Activated CD4-positive, alpha-beta memory T cell treated with anti-CD3 and anti-CD28 coated beads for 36 hours (primary cell): ENCODE measurements at regions of chr19 and their contacts with region 1.

Region 1: DNA sequence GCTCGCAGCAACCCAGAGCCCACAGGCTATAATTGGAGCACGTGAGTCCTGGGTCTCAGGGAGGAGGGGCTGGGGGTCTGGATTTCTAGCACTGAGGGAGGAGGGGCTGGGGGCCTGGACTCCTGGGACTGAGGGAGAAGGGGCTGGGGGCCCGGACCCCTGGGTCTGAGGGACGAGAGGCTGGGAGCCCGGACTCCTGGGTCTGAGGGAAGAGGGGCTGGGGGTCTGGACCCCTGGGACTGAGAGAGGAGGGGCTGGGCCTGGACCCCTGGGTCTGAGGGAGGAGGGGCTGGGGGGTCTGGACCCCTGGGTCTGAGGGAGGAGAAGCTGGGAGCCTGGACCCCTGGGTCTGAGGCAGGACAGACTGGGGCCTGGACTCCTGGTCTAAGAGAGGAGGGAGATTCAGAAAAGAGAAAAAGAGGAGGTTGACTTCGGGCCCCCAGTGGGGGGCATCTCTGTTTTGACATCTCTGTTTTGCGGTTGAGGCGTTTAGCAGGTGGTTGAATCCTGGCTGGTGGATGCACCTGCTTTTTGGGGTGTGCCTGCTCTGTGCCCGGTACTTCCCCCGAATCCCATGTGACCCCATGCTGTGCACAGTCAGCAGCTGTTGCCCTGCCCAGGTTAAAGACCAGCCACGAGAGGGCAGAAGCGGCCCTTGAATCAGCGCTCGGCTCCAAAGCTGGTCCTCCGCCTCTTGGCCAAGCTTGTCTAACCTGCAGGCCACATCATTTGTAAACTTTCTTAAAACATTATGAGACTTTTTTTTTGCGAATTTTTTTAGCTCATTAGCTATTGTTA is 10.5 kb downstream of the PVR start:
- DNase-seq: peak; percentile 87
- H3K4me3 Mint-ChIP-seq: no peak overlapping the region
- H3K27ac Mint-ChIP-seq: no peak overlapping the region
- H3K4me1 Mint-ChIP-seq: peaks cover 10% of the 10 kb centered on the region
- H3K27me3 Mint-ChIP-seq: no peaks in the 10 kb centered on the region

Region 2: DNA sequence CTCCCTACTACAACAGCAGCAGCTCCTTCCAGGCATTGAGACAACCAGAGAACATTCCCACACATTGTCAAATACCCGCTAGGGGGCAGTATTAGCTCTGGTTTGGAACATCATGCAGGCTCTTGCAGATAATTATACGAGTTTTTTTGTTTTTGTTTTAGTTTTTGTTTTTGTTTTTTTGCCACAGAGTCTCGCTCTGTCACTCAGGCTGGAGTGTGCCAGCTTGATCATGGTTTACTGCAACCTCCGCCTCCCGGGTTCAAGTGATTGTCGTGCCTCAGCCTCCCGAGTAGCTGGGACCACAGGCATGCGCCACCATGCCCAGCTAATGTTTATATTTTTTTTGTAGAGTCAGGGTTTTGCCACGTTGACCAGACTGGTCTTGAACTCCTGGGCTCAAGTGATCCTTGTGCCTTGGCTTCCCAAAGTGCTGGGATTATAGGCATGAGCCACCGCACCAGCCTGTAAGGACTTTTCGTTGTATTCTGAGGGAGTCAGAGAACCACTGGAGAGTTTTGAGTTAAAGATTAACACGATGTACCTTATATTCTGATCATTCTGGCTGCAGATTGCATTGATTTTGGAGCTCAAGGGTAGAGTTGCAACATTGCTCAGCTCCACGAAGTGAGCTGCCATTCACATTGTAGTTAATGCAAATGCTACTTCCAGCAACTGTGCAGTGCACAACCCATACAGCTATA is 83.0 kb before region 1 on chr19:
- CTCF ChIA-PET with region 1: interaction called, 31 read pairs
- POLR2A ChIA-PET with region 1: no interaction called
- intact Hi-C with region 1: loop called (anchors 2 kb)
- DNase-seq: peak; percentile 57
- H3K4me3 Mint-ChIP-seq: no peak overlapping the region
- H3K27ac Mint-ChIP-seq: no peak overlapping the region
- H3K4me1 Mint-ChIP-seq: no peaks in the 10 kb centered on the region
- H3K27me3 Mint-ChIP-seq: peaks cover 13% of the 10 kb centered on the region

Region 3: DNA sequence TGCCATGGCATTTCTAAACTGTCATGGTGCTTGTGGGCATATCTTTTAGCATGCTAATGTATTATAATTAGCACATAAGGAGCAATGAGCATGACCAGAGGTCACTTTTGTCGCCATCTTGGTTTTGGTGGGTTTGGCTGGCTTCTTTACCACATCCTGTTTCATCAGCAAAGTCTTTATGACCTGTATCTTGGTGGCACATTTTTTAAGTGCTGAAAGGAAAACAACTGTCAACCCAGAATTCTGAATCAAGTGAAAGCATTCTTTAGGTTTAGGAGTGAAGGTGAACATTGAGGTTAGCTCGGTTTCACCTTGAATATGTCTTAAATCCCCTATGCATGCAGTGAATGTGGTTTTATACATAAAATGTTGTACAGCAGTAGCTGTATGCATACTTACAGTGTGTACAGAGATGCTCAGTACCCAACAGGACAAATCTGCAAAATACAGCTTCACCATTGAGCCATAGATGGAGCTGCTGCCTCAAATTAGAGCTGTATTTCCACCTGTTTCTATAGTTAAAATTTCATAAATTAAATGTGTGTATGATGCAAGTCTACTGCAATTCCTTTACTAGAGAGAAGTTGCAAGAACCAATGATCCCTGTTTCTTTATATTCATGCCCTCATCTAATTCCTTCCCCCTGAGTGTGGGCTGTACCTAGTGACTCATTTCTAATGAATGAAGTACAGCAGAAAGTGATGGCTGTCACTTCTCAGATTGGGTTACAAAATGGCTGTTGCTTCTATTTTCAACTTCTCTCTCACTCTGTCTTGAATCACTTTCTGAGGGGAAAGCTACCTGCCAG is 66.0 kb before region 1 on chr19:
- CTCF ChIA-PET with region 1: interaction called, 5 read pairs
- POLR2A ChIA-PET with region 1: no interaction called
- intact Hi-C with region 1: loop called (anchors 1 kb)
- DNase-seq: peak; percentile 68
- H3K4me3 Mint-ChIP-seq: no peak overlapping the region
- H3K27ac Mint-ChIP-seq: peak overlapping the region; percentile 52
- H3K4me1 Mint-ChIP-seq: peaks cover 15% of the 10 kb centered on the region
- H3K27me3 Mint-ChIP-seq: peaks cover 8% of the 10 kb centered on the region

Region 4: DNA sequence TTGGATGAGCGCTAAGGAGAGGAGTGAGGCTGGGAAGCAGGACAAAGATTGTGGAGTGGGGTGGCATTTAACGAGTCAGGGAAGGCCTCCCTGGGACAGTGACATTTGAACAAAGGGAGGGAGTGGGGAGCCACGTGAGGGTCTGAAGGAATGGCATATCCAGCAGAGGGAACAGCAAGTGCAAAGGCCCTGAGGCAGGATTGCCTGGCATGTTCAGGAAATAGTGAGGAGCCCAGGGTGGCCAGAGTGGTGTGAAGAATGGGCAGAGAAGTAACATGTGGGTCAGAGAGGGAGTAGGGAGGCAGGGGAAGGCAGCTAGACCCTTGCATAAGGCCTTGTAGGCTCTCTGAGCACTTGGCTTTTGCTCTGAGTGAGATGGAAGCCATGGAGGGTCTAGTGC is 25.4 kb before region 1 on chr19:
- CTCF ChIA-PET with region 1: no interaction called
- POLR2A ChIA-PET with region 1: no interaction called
- intact Hi-C with region 1: no loop called
- DNase-seq: no peak
- H3K4me3 Mint-ChIP-seq: no peak overlapping the region
- H3K27ac Mint-ChIP-seq: no peak overlapping the region
- H3K4me1 Mint-ChIP-seq: no peaks in the 10 kb centered on the region
- H3K27me3 Mint-ChIP-seq: peaks cover 3% of the 10 kb centered on the region

Region 5: GRCh38 chr19:44666852-44667556 is 12.8 kb after region 1 on chr19:
- CTCF ChIA-PET with region 1: interaction called, 11 read pairs
- POLR2A ChIA-PET with region 1: no interaction called
- intact Hi-C with region 1: no loop called
- DNase-seq: no peak
- H3K4me3 Mint-ChIP-seq: no peak overlapping the region
- H3K27ac Mint-ChIP-seq: no peak overlapping the region
- H3K4me1 Mint-ChIP-seq: no peaks in the 10 kb centered on the region
- H3K27me3 Mint-ChIP-seq: no peaks in the 10 kb centered on the region

Region 6: GRCh38 chr19:44689056-44689895 is 35.1 kb after region 1 on chr19:
- CTCF ChIA-PET with region 1: interaction called, 9 read pairs
- POLR2A ChIA-PET with region 1: no interaction called
- intact Hi-C with region 1: loop called (anchors 5 kb)
- DNase-seq: peak; percentile 81
- H3K4me3 Mint-ChIP-seq: no peak overlapping the region
- H3K27ac Mint-ChIP-seq: no peak overlapping the region
- H3K4me1 Mint-ChIP-seq: peaks cover 32% of the 10 kb centered on the region
- H3K27me3 Mint-ChIP-seq: peaks cover 10% of the 10 kb centered on the region

Region 7: GRCh38 chr19:44708940-44709339 is 54.8 kb after region 1 on chr19:
- CTCF ChIA-PET with region 1: no interaction called
- POLR2A ChIA-PET with region 1: no interaction called
- intact Hi-C with region 1: no loop called
- DNase-seq: no peak
- H3K4me3 Mint-ChIP-seq: no peak overlapping the region
- H3K27ac Mint-ChIP-seq: no peak overlapping the region
- H3K4me1 Mint-ChIP-seq: no peaks in the 10 kb centered on the region
- H3K27me3 Mint-ChIP-seq: no peaks in the 10 kb centered on the region

Region 8: GRCh38 chr19:44845612-44846454 is 191.7 kb after region 1 on chr19 and contains the start of gene NECTIN2:
- CTCF ChIA-PET with region 1: interaction called, 9 read pairs
- POLR2A ChIA-PET with region 1: no interaction called
- intact Hi-C with region 1: loop called (anchors 10 kb)
- DNase-seq: peak; percentile 96
- H3K4me3 Mint-ChIP-seq: peak within 1 kb of the TSS; percentile 81
- H3K27ac Mint-ChIP-seq: peak within 1 kb of the TSS; percentile 24
- H3K4me1 Mint-ChIP-seq: peaks cover 26% of the 10 kb centered on the region
- H3K27me3 Mint-ChIP-seq: peaks cover 11% of the 10 kb centered on the region
- total RNA-seq, gene NECTIN2: 0.71 to 1.9 TPM